Posterior vena cava (tissue), 2 donors: ENCODE measurements at regions of chr17 and their contacts with region 1.

Region 1: GRCh38 chr17:5226940-5227878 is 7.5 kb downstream of the SCIMP start:
- DNase-seq: no peak

Region 2: DNA sequence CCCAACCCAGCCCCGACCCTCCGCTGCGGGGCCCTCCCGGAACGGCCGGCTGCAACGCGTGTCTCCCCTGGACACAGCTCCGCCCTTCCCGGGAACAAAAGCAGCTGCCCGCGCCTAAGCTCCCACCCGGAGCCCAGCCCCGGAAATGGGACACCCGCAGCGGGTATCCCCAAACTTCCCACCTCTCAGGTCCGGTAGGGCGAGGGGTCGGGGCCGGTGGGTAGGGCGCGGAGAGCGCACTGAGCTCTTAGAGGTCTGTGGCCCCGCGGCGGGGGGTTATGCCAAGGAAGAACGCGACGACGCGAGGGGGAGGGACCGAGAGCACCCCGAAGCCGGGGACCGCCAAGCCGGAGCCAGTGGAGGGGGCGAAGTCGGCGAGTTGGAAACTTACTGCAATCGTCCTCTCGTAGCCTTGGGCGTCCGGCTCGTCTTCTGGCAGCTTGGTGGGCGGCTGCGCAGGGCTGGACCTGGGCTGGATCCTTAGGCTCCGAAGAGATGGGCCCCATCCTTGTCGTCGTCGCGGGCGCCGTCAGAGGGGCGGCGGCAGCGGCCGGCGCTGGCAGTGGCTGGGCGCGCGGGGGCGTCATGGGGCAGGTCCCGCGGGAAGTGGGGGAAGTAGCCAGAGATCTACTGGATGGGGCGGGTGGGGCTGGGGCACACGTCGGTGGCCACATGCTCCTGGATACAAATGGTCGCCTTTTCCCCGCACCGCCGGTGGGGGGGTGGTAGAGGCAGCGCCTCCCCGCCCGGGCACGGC is 104.4 kb before region 1 on chr17:
- intact Hi-C with region 1: no loop called
- DNase-seq: peak; percentile 79

Region 3: GRCh38 chr17:5155495-5155894 is 71.7 kb before region 1 on chr17:
- intact Hi-C with region 1: no loop called
- DNase-seq: no peak

Region 4: DNA sequence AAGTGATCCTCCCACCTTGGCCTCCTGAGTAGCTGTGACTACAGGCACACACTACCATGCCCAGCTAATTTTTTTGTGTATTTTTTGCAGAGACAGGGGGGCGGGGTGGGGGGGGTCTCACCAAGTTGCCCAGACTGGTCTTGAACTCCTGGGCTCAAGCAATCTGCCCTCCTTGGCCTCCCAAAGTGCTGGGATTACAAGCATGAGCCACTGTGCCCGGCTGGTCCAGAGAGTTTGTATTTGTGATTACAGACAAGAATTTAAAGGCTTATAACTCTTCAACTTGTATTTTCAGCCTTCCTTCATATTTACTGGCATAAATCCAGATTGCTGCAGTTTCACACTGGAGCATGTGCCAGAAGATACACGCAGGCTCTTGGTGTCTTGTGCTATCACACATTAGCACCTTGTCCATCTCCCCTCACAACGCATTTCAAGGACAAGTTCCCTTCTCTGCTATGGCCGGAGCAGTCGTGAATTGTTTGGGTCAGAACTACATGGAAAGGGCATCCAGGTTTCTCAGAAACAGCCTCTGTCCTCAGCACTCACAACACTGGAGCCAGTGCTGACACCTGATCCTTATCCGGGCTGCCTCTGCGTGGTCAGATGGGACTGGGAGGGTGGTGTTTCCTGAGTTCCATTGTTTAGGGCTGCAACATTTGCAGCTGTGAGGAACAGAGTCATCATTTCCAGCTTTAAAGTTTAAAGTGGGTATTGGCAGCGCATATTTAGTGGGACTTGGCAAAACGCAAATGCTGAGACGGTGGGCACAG is 871.0 kb after region 1 on chr17:
- intact Hi-C with region 1: loop called in 1 of 2 experiments (anchors 10 kb)
- DNase-seq: peak; percentile 66